GM12878 (cell line): ENCODE measurements at regions of chr3 and their contacts with region 1.

Region 1: GRCh38 chr3:901953-902778 is 190.7 kb upstream of the CNTN6 start:
- DNase-seq: no peak
- ATAC-seq: peak; percentile 86
- H3K4me3 ChIP-seq: no peak overlapping the region
- H3K27ac ChIP-seq: no peak overlapping the region
- H3K4me1 ChIP-seq: no peaks in the 10 kb centered on the region
- H3K27me3 ChIP-seq: no peaks in the 10 kb centered on the region
- CTCF ChIP-seq: peak; percentile 28 to 53 (median 48); a peak in 4 of 6 replicates
- EP300 ChIP-seq: no peak
- POLR2A ChIP-seq: no peak
- RAD21 ChIP-seq: peak; percentile 40; the same call in 1 of the 2 replicates

Region 2: DNA sequence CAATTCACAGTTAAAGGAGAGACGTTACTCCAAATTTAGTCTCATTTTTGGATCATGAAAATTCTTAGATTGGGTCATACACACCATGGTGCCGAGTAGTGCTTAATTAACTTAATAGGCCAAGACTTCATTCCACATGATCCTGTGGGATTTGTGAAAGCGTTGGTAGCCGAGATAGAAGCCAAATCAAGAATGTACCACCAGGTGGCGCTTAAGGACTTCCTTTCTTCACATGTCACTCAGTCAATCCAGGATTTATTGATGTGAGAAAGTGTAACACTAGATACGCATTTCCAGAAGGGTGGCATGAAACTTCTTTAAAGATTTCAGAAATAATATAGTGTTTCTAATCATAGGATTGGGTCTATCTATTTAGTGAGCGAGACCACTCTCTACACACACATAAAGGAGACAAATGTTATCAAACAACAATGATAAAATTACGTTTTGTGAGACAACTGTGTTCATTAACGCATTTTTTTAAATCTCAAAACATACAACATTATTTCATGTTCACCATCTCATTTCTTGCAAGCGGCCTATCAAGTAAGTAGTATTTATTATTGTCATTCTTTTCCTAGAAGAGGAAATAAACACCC is 269.5 kb before region 1 on chr3:
- CTCF ChIA-PET with region 1: no interaction called
- POLR2A ChIA-PET with region 1: no interaction called
- RAD21 ChIA-PET with region 1: no interaction called
- SMC1A ChIA-PET with region 1: no interaction called
- in situ Hi-C with region 1: no loop called
- intact Hi-C with region 1: loop called (anchors 5 kb)
- DNase-seq: no peak
- ATAC-seq: peak; percentile 79
- H3K4me3 ChIP-seq: no peak overlapping the region
- H3K27ac ChIP-seq: no peak overlapping the region
- H3K4me1 ChIP-seq: no peaks in the 10 kb centered on the region
- H3K27me3 ChIP-seq: no peaks in the 10 kb centered on the region
- CTCF ChIP-seq: peak; percentile 63 to 77 (median 68)
- EP300 ChIP-seq: no peak
- POLR2A ChIP-seq: no peak
- RAD21 ChIP-seq: peak; percentile 75

Region 3: DNA sequence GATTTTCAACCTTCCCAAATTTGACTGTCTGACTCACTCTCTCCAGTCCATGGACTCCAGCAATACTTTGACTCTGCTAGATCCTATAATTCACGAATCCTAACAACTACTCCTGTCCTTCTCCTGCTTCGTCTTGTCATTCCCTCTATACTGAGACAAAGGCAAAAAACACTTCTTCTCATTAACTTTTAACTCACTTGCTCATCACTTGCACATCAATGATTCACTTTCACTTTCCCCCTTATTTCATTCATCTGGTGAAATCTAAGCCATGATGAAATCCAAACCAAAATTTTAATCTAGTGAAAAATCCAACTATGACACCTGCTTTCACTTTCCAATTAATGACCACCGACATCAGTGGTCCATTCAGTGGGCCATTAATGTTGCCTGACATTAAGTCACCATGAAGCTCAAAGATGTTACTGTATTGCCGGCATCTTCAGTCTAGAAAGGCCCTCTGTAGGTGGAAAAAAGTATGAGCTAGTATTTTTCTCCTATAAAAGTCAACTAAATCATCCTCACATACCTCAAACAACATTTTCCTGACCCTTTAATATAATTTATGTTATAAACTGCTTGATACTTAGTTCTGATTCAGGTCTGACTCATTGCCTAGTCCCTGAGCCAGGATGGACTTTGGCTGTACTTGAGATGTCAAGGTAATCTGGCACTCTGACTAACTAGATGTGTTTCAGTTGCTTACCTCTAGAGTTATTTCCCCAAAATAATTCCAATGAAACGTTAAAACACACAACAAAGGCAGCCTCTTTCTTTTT is 349.3 kb after region 1 on chr3:
- CTCF ChIA-PET with region 1: no interaction called
- POLR2A ChIA-PET with region 1: no interaction called
- RAD21 ChIA-PET with region 1: no interaction called
- SMC1A ChIA-PET with region 1: interaction called, 3 read pairs
- in situ Hi-C with region 1: no loop called
- intact Hi-C with region 1: loop called (anchors 10 kb)
- DNase-seq: no peak
- ATAC-seq: no peak
- H3K4me3 ChIP-seq: no peak overlapping the region
- H3K27ac ChIP-seq: no peak overlapping the region
- H3K4me1 ChIP-seq: no peaks in the 10 kb centered on the region
- H3K27me3 ChIP-seq: no peaks in the 10 kb centered on the region
- CTCF ChIP-seq: no peak
- EP300 ChIP-seq: no peak
- POLR2A ChIP-seq: no peak
- RAD21 ChIP-seq: no peak

Region 4: GRCh38 chr3:1883488-1883887 is 981.3 kb after region 1 on chr3:
- CTCF ChIA-PET with region 1: no interaction called
- POLR2A ChIA-PET with region 1: no interaction called
- RAD21 ChIA-PET with region 1: no interaction called
- SMC1A ChIA-PET with region 1: no interaction called
- in situ Hi-C with region 1: no loop called
- intact Hi-C with region 1: no loop called
- DNase-seq: no peak
- ATAC-seq: no peak
- H3K4me3 ChIP-seq: no peak overlapping the region
- H3K27ac ChIP-seq: no peak overlapping the region
- H3K4me1 ChIP-seq: no peaks in the 10 kb centered on the region
- H3K27me3 ChIP-seq: no peaks in the 10 kb centered on the region
- CTCF ChIP-seq: no peak
- EP300 ChIP-seq: no peak
- POLR2A ChIP-seq: no peak
- RAD21 ChIP-seq: no peak